Testis (tissue), 5 donors: ENCODE measurements at regions of chr15 and their contacts with region 1.

Region 1: GRCh38 chr15:79283252-79284048 is 928 bp downstream of the ANKRD34C start:
- DNase-seq: peak; percentile 57
- H3K4me3 ChIP-seq: peak overlapping the region in 1 of 2 donors; percentile 17
- H3K27ac ChIP-seq: no peak overlapping the region
- H3K4me1 ChIP-seq: no peaks in the 10 kb centered on the region
- H3K27me3 ChIP-seq: no peaks in the 10 kb centered on the region
- CTCF ChIP-seq: no peak
- POLR2A ChIP-seq: no peak

Region 2: GRCh38 chr15:78938658-78939488 is 344.6 kb before region 1 on chr15:
- intact Hi-C with region 1: no loop called
- DNase-seq: no peak
- H3K4me3 ChIP-seq: no peak overlapping the region
- H3K27ac ChIP-seq: peak overlapping the region in 1 of 2 donors; percentile 67
- H3K4me1 ChIP-seq: peaks cover 14% of the 10 kb centered on the region
- H3K27me3 ChIP-seq: no peaks in the 10 kb centered on the region
- CTCF ChIP-seq: no peak
- POLR2A ChIP-seq: no peak

Region 3: DNA sequence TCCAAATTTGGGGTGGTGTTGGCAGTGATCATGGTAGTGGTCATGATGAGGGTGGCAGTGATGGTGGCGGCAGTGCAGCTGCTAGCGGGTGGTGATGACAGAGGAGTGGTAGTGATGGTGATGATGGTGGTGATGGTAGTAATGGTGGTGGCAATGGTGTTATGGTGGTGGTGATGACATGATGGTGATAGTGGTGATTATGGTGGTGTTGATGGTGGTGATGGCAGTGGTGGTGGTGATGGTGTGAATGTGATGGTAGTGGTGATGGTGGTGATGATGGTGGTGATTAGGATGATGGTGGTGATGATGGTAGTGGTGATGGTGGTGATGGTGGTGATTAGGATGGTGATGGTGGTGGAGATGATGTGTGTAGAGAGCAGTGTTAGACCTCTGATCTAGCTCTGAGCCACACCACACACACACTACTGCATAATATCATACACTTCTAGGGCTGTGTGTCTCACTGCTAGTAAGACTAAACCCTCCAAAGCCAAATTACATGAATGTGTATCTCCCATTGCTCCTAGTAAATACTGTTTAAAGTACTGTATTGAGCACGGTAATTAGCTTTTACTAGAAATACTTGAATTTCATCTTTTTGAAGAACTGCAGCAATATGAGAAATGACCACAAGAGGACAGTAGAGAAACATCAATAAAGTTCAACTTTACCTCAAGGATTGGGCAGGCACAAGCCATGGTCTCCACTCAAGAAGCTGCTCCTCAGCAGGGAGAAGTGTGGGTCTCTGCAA is 56.3 kb after region 1 on chr15:
- intact Hi-C with region 1: loop called (anchors 10 kb)
- DNase-seq: peak; percentile 32
- H3K4me3 ChIP-seq: no peak overlapping the region
- H3K27ac ChIP-seq: no peak overlapping the region
- H3K4me1 ChIP-seq: no peaks in the 10 kb centered on the region
- H3K27me3 ChIP-seq: no peaks in the 10 kb centered on the region
- CTCF ChIP-seq: peak; percentile 67 to 82 (median 72)
- POLR2A ChIP-seq: no peak

Region 4: GRCh38 chr15:79505956-79506355 is 222.5 kb after region 1 on chr15:
- intact Hi-C with region 1: no loop called
- DNase-seq: no peak
- H3K4me3 ChIP-seq: no peak overlapping the region
- H3K27ac ChIP-seq: no peak overlapping the region
- H3K4me1 ChIP-seq: no peaks in the 10 kb centered on the region
- H3K27me3 ChIP-seq: no peaks in the 10 kb centered on the region
- CTCF ChIP-seq: no peak
- POLR2A ChIP-seq: no peak